ENCODE measurements at regions of chr6 and their contacts with region 1.

Region 1: GRCh38 chr6:455006-455585 is 63.5 kb downstream of the IRF4 start:
- DNase-seq: peak; percentile 71
- H3K4me3 Mint-ChIP-seq: no peak overlapping the region
- H3K27ac Mint-ChIP-seq: peak overlapping the region; percentile 4
- H3K4me1 Mint-ChIP-seq: peaks cover 24% of the 10 kb centered on the region
- H3K27me3 Mint-ChIP-seq: no peaks in the 10 kb centered on the region

Region 2: GRCh38 chr6:168865-169455 is 286.1 kb before region 1 on chr6:
- CTCF ChIA-PET with region 1: no interaction called
- POLR2A ChIA-PET with region 1: no interaction called
- intact Hi-C with region 1: no loop called
- DNase-seq: no peak
- H3K4me3 Mint-ChIP-seq: no peak overlapping the region
- H3K27ac Mint-ChIP-seq: no peak overlapping the region
- H3K4me1 Mint-ChIP-seq: no peaks in the 10 kb centered on the region
- H3K27me3 Mint-ChIP-seq: peaks cover 1% of the 10 kb centered on the region

Region 3: DNA sequence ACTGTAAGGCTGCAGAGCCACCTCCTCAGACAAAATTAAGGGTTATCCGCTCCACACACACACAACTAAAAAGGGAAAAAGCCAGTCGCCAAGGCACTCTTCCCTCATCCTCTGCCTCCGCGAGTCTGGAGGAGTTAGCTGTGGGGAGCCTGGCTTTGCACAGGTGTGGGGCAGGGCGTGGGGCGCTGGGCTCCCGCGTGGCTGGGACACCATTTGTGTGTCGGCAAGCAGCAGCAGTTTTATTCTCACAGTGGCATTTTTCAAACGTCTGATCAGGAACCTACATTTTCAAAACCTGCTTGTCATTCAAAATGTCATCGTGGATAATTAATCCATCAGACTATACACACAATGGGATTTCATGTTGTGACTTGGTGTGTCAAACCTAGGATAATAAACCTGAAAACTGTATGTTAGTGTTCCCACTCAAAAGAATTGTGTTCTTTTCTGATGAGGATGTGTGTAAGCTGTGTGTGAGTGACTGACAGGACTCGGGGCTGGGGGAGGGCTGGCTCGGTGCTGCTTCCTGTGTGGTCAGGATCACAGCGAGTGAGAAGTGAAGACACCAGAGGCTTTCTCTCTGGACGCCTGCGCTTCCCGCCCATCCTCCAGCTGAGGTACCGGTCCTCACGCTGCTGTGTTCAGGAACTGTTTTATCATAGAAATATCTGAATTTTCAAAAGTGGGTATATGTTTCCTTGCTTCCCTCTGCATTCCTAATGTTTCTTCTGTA is 19.5 kb after region 1 on chr6:
- CTCF ChIA-PET with region 1: no interaction called
- POLR2A ChIA-PET with region 1: interaction called, 3 read pairs
- intact Hi-C with region 1: loop called (anchors 2 kb)
- DNase-seq: peak; percentile 92
- H3K4me3 Mint-ChIP-seq: peak overlapping the region; percentile 44
- H3K27ac Mint-ChIP-seq: peak overlapping the region; percentile 83
- H3K4me1 Mint-ChIP-seq: peaks cover 74% of the 10 kb centered on the region
- H3K27me3 Mint-ChIP-seq: peaks cover 4% of the 10 kb centered on the region

Measured in activated CD4-positive, alpha-beta memory T cell treated with anti-CD3 and anti-CD28 coated beads for 36 hours (primary cell).